ENCODE measurements at regions of chrX and their contacts with region 1.

Region 1: DNA sequence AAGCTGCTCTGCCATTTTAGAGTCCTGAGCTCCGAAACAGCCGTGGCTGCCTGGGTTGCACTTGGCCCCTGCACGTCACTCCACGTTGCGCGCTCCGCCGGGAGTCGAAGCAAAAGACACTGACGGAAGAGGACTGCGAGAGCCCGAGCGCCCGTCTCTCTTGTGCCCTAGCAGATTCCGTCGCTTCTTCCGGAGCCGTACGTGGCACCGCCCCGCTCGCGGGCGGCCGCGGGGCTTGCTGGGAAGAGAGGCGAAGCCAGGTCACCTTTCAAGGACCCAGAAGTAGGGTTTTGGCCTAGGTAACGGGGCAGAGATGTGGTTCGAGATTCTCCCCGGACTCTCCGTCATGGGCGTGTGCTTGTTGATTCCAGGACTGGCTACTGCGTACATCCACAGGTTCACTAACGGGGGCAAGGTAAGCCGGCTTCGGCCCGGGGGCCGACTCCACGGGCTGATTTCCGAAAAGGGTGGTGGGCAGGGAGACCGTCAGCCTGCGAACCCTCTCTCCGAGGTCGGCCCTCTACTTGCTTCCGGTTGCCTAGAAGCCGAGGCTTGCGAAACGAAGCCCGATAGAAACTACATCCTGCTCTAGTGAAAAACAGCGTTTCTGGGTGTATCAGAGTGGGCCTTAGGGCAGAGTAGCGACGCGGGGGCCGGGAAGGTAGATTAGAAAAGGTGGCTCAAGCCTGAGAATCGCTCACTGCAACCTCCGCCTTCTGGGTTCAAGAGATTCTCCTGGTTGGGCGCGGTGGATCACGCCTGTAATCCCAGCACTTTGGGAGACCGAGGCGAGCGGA is at the starts of genes NDUFA1 and RNF113A:
- DNase-seq: peak; percentile 89 to 91
- ATAC-seq: peak; percentile 95
- H3K4me3 ChIP-seq: peak within 1 kb of the TSS; percentile 42 to 63
- H3K27ac ChIP-seq: peak within 1 kb of the TSS in 1 of 2 donors; percentile 95
- H3K4me1 ChIP-seq: no peaks in the 10 kb centered on the region
- H3K27me3 ChIP-seq: no peaks in the 10 kb centered on the region
- total RNA-seq, gene NDUFA1: 53.8 to 64.4 TPM
- total RNA-seq, gene RNF113A: 9.6 to 10.1 TPM

Region 2: GRCh38 chrX:119468930-119469635 is 402.7 kb before region 1 on chrX:
- intact Hi-C with region 1: loop called in 1 of 2 experiments (anchors 10 kb)
- DNase-seq: peak; percentile 90 to 96
- ATAC-seq: peak; percentile 93
- H3K4me3 ChIP-seq: peak overlapping the region; percentile 50 to 62
- H3K27ac ChIP-seq: peak overlapping the region in 1 of 2 donors; percentile 82
- H3K4me1 ChIP-seq: no peaks in the 10 kb centered on the region
- H3K27me3 ChIP-seq: no peaks in the 10 kb centered on the region

Region 3: GRCh38 chrX:119516157-119516702 is 355.6 kb before region 1 on chrX:
- intact Hi-C with region 1: loop called in 1 of 2 experiments (anchors 10 kb)
- DNase-seq: no peak
- ATAC-seq: peak; percentile 75
- H3K4me3 ChIP-seq: no peak overlapping the region
- H3K27ac ChIP-seq: no peak overlapping the region
- H3K4me1 ChIP-seq: no peaks in the 10 kb centered on the region
- H3K27me3 ChIP-seq: no peaks in the 10 kb centered on the region

Region 4: GRCh38 chrX:119791438-119792231 is 80.2 kb before region 1 on chrX and contains the start of gene RPL39:
- intact Hi-C with region 1: loop called (anchors 5 kb)
- DNase-seq: peak; percentile 88 to 92
- ATAC-seq: peak; percentile 97
- H3K4me3 ChIP-seq: peak within 1 kb of the TSS; percentile 44 to 45
- H3K27ac ChIP-seq: peak within 1 kb of the TSS; percentile 58 to 81
- H3K4me1 ChIP-seq: no peaks in the 10 kb centered on the region
- H3K27me3 ChIP-seq: no peaks in the 10 kb centered on the region
- total RNA-seq, gene RPL39: 1,166 to 1,184 TPM

Region 5: DNA sequence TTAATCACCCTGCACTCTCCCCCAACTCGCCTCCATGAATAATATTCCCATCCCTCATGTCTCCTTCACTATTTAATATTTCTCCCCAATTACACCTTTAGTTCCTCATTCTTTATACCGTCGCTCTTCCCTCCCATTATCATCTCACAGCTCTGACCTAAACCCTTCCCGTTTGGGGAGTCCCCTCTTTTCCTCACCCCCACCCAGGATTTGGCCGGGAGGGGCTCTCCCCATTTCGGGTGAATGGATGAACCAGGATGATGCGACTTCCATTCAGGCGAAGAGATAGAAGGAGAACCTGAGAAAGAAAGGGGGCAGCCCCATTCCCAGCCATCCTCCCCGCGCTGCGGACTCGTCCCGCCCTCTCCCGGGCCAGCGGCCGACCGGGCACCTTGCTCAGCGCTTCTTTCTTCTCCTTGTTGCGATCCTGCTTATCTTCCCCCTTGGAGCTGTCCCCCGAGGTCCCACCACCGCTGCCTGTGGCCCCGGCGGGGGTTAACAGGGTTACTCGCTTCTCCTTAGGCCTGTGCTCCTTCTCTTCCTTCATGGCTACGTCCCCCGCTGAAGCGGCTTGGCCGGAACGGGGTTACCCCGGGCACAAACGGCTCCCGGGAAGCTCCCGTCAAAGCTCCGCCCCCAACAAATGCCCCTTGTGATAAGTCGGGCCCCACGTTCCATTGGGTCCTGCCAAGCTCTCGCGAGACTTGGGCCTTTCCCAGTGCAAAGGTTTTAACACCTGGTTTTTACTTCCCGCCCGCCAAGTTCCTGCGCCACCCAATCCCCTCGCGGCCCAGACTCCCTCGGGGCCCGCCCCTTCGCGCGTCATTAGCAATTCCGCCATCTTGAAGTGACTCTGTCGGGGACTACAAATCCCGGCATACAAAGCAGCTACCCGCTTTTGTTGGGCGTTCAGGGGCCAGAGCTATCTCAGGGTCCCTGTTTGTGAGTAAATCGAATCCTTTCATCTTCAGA is 19.1 kb before region 1 on chrX and contains the start of gene UPF3B:
- intact Hi-C with region 1: loop called in 1 of 2 experiments (anchors 2 kb)
- DNase-seq: peak; percentile 97 to 98
- ATAC-seq: peak; percentile 94
- H3K4me3 ChIP-seq: peak within 1 kb of the TSS; percentile 38 to 57
- H3K27ac ChIP-seq: peak within 1 kb of the TSS in 1 of 2 donors; percentile 71
- H3K4me1 ChIP-seq: no peaks in the 10 kb centered on the region
- H3K27me3 ChIP-seq: no peaks in the 10 kb centered on the region
- total RNA-seq, gene UPF3B: 6.7 to 9.5 TPM

Region 6: DNA sequence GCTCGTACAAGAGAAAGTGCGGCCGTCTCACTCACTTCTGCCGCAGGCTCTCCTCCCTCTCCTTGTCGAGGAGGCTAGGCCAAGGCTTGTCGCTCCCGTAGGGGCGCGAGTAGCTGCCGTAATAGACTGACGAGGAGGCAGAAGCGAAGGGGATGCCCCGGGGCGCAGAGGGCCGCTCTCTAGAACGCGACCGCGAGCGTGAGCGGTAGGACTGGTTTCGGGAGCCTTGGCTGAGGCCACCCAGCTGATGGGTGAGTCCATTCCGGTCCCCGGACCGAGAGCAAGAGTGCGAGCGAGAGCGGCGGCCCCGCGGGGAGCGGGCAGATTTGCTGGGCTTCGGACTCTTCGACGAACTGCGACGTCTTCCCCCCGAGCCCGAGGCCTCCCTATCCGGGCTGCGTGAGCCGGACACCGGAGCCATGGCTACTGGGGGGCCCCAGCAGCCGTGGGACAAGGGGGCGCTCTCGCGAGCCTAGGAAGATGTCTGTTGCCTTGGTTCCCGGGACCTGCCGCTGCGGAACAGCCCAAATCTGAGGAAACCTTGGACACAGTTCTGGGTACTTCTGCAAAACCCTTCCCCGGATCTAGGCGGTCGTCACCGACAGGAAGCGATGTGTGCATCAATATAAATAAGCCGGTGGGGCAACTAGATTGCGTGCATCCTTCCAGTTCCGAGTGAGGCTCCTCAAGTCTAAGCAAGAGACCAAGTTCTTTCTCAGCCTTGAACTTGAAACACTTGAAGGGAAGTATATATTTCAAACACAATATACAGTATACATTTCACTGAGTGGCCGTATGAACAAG is 71.6 kb after region 1 on chrX and contains the start of gene NKAP:
- intact Hi-C with region 1: loop called in 1 of 2 experiments (anchors 5 kb)
- DNase-seq: peak; percentile 85 to 88
- ATAC-seq: peak; percentile 94
- H3K4me3 ChIP-seq: peak within 1 kb of the TSS; percentile 60 to 81
- H3K27ac ChIP-seq: peak within 1 kb of the TSS in 1 of 2 donors; percentile 96
- H3K4me1 ChIP-seq: no peaks in the 10 kb centered on the region
- H3K27me3 ChIP-seq: no peaks in the 10 kb centered on the region
- total RNA-seq, gene NKAP: 7.0 to 8.0 TPM

Measured in aorta (tissue), 5 donors.